MCF 10A (cell line): ENCODE measurements at regions of chr4 and their contacts with region 1.

Region 1: GRCh38 chr4:144174401-144175067 is 34.0 kb upstream of the GYPA start:
- DNase-seq: peak; percentile 66
- H3K4me3 Mint-ChIP-seq: no peak overlapping the region
- H3K27ac Mint-ChIP-seq: no peak overlapping the region
- H3K4me1 Mint-ChIP-seq: peaks cover 6% of the 10 kb centered on the region
- H3K27me3 Mint-ChIP-seq: no peaks in the 10 kb centered on the region
- CTCF ChIP-seq: peak; percentile 69

Region 2: DNA sequence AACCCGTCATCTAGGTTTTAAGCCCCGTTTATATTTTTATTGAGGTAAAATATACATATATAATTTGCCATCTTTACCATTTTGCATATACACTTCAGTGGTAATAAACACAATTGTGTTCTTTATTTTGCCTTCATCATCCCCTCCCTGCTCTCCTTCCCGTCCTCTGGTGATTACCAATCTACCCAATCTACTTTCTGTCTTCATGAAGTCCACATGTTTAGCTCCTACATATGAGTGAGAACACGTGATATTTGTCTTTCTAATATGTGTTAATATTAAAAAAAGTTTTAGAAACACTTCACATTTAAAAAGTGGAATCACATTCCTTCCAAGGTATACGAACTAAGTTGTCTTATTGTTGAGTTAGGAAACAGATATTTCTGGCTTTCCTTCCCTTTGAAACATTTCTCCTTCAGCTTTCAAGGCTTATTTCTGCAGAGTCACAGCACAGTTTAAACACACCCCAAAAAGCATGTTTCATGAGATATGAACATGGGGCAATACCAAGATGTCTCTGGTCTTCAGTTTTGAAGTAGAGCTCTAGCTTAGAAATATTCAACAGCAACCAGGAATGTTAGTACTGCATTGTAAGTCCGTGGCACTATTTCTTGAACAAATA is 69.9 kb before region 1 on chr4:
- CTCF ChIA-PET with region 1: no interaction called
- POLR2A ChIA-PET with region 1: no interaction called
- intact Hi-C with region 1: no loop called
- DNase-seq: no peak
- H3K4me3 Mint-ChIP-seq: no peak overlapping the region
- H3K27ac Mint-ChIP-seq: no peak overlapping the region
- H3K4me1 Mint-ChIP-seq: no peaks in the 10 kb centered on the region
- H3K27me3 Mint-ChIP-seq: peaks cover 51% of the 10 kb centered on the region
- CTCF ChIP-seq: no peak

Region 3: DNA sequence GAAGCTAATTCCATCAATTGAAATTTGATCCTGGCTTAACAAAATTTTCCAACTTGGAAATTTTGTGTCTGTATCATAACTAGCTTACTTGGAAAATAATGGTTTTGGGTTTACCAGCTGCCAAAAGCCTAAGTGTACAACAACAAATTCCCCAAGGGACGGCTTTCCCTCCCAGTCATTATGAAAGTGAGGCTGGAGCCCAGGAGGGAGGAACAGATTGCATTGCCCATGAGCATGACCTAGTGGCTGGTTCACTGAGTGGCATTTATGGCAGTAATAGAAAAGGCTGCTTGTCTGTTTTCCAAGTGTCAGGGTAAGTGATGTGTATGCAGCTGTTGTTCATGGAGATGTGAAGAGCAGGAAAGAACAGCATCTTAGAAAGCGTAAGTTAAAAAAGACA is 400.6 kb after region 1 on chr4:
- CTCF ChIA-PET with region 1: no interaction called
- POLR2A ChIA-PET with region 1: no interaction called
- intact Hi-C with region 1: loop called (anchors 10 kb)
- DNase-seq: peak; percentile 23
- H3K4me3 Mint-ChIP-seq: no peak overlapping the region
- H3K27ac Mint-ChIP-seq: no peak overlapping the region
- H3K4me1 Mint-ChIP-seq: peaks cover 7% of the 10 kb centered on the region
- H3K27me3 Mint-ChIP-seq: no peaks in the 10 kb centered on the region
- CTCF ChIP-seq: no peak

Region 4: GRCh38 chr4:144754562-144755410 is 580.3 kb after region 1 on chr4:
- CTCF ChIA-PET with region 1: interaction called, 5 read pairs
- POLR2A ChIA-PET with region 1: no interaction called
- intact Hi-C with region 1: loop called (anchors 1 kb)
- DNase-seq: peak; percentile 35
- H3K4me3 Mint-ChIP-seq: no peak overlapping the region
- H3K27ac Mint-ChIP-seq: no peak overlapping the region
- H3K4me1 Mint-ChIP-seq: no peaks in the 10 kb centered on the region
- H3K27me3 Mint-ChIP-seq: no peaks in the 10 kb centered on the region
- CTCF ChIP-seq: peak; percentile 66

Region 5: DNA sequence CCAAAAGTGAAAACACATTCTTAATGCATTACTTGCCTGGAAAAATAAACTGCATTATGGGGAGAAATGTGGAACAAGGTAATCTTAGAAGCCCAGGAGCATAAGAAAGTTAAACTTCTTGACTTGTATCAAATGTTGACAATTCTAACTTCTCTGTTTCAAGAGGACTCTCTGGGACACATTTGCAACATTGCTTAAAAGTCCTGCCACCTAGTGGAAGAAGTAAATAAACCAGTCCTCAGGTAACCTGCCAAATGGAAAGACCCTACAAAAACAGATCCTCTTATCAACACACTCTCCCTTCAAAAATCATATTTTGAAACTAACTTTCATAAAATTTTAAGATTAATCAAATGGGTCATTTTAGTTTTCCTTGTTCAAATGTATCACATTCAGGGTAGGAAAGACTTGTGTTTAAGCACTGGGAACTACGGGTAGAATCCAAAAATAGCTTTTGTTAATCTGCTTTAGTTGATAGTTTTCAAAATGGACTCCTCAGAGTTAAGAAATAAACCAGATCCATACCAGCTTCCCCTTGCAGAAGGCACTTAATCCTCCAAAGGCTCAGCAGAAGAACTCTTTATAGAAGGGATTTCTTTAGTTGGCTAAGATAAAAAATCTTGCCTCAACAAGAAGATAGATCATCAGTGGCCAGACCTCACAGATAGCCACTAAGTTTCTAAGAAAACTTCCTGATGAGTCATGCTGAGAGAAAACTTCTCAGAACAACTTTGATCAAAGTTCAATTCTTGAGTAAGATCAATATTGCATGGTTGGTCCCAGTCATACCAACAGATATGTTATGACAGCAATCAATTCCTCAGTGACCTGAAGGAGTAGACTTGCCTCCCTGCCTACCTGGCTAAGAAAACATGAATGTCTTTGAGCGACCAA is 613.1 kb after region 1 on chr4:
- CTCF ChIA-PET with region 1: interaction called, 6 read pairs
- POLR2A ChIA-PET with region 1: no interaction called
- intact Hi-C with region 1: loop called (anchors 1 kb)
- DNase-seq: peak; percentile 56
- H3K4me3 Mint-ChIP-seq: no peak overlapping the region
- H3K27ac Mint-ChIP-seq: no peak overlapping the region
- H3K4me1 Mint-ChIP-seq: peaks cover 6% of the 10 kb centered on the region
- H3K27me3 Mint-ChIP-seq: no peaks in the 10 kb centered on the region
- CTCF ChIP-seq: peak; percentile 55

Region 6: GRCh38 chr4:145061318-145061920 is 886.9 kb after region 1 on chr4:
- CTCF ChIA-PET with region 1: interaction called, 15 read pairs
- POLR2A ChIA-PET with region 1: no interaction called
- intact Hi-C with region 1: loop called (anchors 1 kb)
- DNase-seq: peak; percentile 60
- H3K4me3 Mint-ChIP-seq: no peak overlapping the region
- H3K27ac Mint-ChIP-seq: no peak overlapping the region
- H3K4me1 Mint-ChIP-seq: no peaks in the 10 kb centered on the region
- H3K27me3 Mint-ChIP-seq: no peaks in the 10 kb centered on the region
- CTCF ChIP-seq: peak; percentile 34

Region 7: GRCh38 chr4:145097821-145098674 is 923.5 kb after region 1 on chr4 and contains the starts of genes ABCE1 and ANAPC10:
- CTCF ChIA-PET with region 1: interaction called, 8 read pairs
- POLR2A ChIA-PET with region 1: interaction called, 5 read pairs
- intact Hi-C with region 1: loop called (anchors 1 kb)
- DNase-seq: peak; percentile 98
- H3K4me3 Mint-ChIP-seq: peak within 1 kb of the TSS; percentile 94
- H3K27ac Mint-ChIP-seq: peak within 1 kb of the TSS; percentile 99
- H3K4me1 Mint-ChIP-seq: peaks cover 10% of the 10 kb centered on the region
- H3K27me3 Mint-ChIP-seq: no peaks in the 10 kb centered on the region
- CTCF ChIP-seq: peak; percentile 12
- total RNA-seq, gene ABCE1: 136 and 140 TPM in 2 replicates
- total RNA-seq, gene ANAPC10: 32.2 and 38.9 TPM in 2 replicates

Region 8: GRCh38 chr4:145609481-145610427 is 1435.2 kb after region 1 on chr4:
- CTCF ChIA-PET with region 1: no interaction called
- POLR2A ChIA-PET with region 1: no interaction called
- intact Hi-C with region 1: loop called (anchors 1 kb)
- DNase-seq: peak; percentile 83
- H3K4me3 Mint-ChIP-seq: no peak overlapping the region
- H3K27ac Mint-ChIP-seq: no peak overlapping the region
- H3K4me1 Mint-ChIP-seq: no peaks in the 10 kb centered on the region
- H3K27me3 Mint-ChIP-seq: no peaks in the 10 kb centered on the region
- CTCF ChIP-seq: peak; percentile 77